ENCODE measurements at regions of chr1 and their contacts with region 1.

Region 1: GRCh38 chr1:162276493-162276892 is 100.2 kb downstream of the SPATA46 start:
- DNase-seq: peak; percentile 32
- H3K4me3 Mint-ChIP-seq: no peak overlapping the region
- H3K27ac Mint-ChIP-seq: no peak overlapping the region
- H3K4me1 Mint-ChIP-seq: peaks cover 8% of the 10 kb centered on the region
- H3K27me3 Mint-ChIP-seq: no peaks in the 10 kb centered on the region
- CTCF ChIP-seq: peak; percentile 56

Region 2: DNA sequence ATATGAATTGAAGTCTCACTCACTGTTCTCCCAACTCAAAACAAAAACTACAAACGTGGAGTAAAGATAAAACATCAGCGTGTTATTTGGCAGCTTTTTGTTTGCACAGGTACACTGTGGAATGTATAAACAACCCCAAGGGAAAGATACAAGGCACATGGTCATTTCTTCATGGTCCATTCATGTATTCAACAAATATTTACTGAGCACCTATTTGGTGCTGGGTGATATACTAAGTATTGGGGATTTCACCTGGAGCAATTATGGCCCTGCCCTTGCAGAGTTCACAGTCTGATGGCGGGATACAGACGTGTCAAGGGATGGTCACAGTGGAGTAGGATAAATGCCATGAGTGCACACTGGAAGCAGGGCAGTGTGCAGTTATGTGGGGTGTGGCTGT is 35.9 kb before region 1 on chr1:
- CTCF ChIA-PET with region 1: interaction called, 5 read pairs
- intact Hi-C with region 1: loop called (anchors 1 kb)
- DNase-seq: no peak
- H3K4me3 Mint-ChIP-seq: no peak overlapping the region
- H3K27ac Mint-ChIP-seq: no peak overlapping the region
- H3K4me1 Mint-ChIP-seq: peaks cover 26% of the 10 kb centered on the region
- H3K27me3 Mint-ChIP-seq: no peaks in the 10 kb centered on the region
- CTCF ChIP-seq: no peak

Measured in Calu3 (cell line).